Left cardiac atrium (tissue), 4 donors: ENCODE measurements at regions of chr4 and their contacts with region 1.

Region 1: DNA sequence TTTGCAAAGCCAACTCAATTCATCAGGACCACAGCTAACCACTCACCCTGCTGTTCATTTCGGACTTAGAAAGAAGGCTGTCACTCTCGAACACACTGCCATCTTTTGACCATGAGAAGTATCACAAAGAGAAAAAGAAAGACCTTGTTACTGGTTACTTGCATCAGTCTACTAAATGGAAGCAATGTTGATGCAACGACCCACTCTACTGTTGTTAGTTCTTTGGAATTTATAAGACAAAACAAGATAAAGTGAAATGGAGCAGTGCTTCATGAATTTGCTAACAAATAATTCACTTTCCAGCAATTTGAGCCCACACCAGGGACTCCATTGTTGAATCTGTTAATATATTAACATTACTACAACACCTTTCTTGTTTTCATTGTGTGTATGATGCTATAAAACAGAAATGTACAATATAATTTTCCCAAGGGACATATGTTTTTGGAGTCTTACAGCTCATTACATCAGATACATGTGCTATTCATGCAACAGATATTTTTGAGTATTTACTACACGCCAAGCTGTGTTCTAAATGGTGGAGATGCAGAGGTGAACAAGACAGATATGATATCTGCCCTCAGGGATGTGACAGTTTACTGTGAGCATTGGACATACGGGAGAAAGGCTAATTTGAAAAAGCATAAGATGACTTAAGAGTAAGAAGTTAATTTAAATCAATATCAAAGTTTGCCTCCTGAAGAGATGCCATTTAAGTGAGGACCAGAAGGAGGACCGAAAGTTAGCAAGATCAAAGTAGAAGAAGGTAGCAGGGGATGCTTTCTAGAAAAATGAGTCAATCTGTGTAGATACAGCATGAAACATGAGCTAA is 87.2 kb downstream of the AREG start:
- DNase-seq: no peak
- ATAC-seq: peak; percentile 74 to 80

Region 2: GRCh38 chr4:74376888-74377483 is 155.2 kb before region 1 on chr4:
- intact Hi-C with region 1: loop called (anchors 2 to 5 kb)
- DNase-seq: no peak
- ATAC-seq: peak; percentile 72 to 81

Region 3: GRCh38 chr4:74444891-74445642 is 87.1 kb before region 1 on chr4 and contains the start of gene AREG:
- intact Hi-C with region 1: loop called in 1 of 2 experiments (anchors 5 kb)
- DNase-seq: peak; percentile 89
- ATAC-seq: peak; percentile 93 to 96
- total RNA-seq, gene AREG: 4.6 to 22.8 TPM